Dendritic cell treated with granulocyte-macrophage colony-stimulating factor and Interleukin-4, amounts not matched to agents 40 ng/mL and 50 ng/mL, for 4 days (primary cell): ENCODE measurements at regions of chr9 and their contacts with region 1.

Region 1: GRCh38 chr9:129177791-129178559 is at the start of gene IER5L:
- H3K4me3 Mint-ChIP-seq: peak within 1 kb of the TSS; percentile 99
- H3K27ac Mint-ChIP-seq: peak within 1 kb of the TSS; percentile 91
- H3K4me1 Mint-ChIP-seq: peaks cover 40% of the 10 kb centered on the region
- H3K27me3 Mint-ChIP-seq: peaks cover 31% of the 10 kb centered on the region

Region 2: DNA sequence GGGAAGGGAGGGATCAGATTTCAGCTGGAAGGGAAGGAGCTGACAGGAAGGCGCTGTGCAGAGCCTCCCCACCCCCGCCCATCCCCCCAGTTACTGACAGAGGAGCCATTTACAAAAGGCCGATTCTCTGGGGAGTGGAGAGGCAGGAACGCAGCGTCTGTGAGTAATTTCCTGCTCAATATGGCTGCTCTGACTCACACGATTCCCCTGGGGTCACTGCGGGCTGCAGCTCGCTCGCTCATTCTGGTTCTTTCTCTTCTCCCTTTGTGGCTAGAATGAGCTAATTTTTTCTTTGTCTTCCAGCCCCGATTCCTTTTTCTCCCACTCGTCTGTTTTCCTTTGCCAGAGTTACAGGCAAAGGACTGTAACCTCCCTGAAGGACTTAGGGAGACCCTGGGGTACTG is 38.0 kb before region 1 on chr9:
- intact Hi-C with region 1: loop called (anchors 5 kb)
- H3K4me3 Mint-ChIP-seq: peak overlapping the region; percentile 77
- H3K27ac Mint-ChIP-seq: peak overlapping the region; percentile 96
- H3K4me1 Mint-ChIP-seq: peaks cover 59% of the 10 kb centered on the region
- H3K27me3 Mint-ChIP-seq: no peaks in the 10 kb centered on the region

Region 3: GRCh38 chr9:129333953-129334724 is 156.2 kb after region 1 on chr9:
- intact Hi-C with region 1: loop called (anchors 5 kb)
- H3K4me3 Mint-ChIP-seq: peak overlapping the region; percentile 73
- H3K27ac Mint-ChIP-seq: peak overlapping the region; percentile 83
- H3K4me1 Mint-ChIP-seq: peaks cover 54% of the 10 kb centered on the region
- H3K27me3 Mint-ChIP-seq: no peaks in the 10 kb centered on the region

Region 4: GRCh38 chr9:129413537-129414376 is 235.8 kb after region 1 on chr9:
- intact Hi-C with region 1: loop called (anchors 10 kb)
- H3K4me3 Mint-ChIP-seq: peak overlapping the region; percentile 82
- H3K27ac Mint-ChIP-seq: peak overlapping the region; percentile 93
- H3K4me1 Mint-ChIP-seq: peaks cover 45% of the 10 kb centered on the region
- H3K27me3 Mint-ChIP-seq: no peaks in the 10 kb centered on the region

Region 5: DNA sequence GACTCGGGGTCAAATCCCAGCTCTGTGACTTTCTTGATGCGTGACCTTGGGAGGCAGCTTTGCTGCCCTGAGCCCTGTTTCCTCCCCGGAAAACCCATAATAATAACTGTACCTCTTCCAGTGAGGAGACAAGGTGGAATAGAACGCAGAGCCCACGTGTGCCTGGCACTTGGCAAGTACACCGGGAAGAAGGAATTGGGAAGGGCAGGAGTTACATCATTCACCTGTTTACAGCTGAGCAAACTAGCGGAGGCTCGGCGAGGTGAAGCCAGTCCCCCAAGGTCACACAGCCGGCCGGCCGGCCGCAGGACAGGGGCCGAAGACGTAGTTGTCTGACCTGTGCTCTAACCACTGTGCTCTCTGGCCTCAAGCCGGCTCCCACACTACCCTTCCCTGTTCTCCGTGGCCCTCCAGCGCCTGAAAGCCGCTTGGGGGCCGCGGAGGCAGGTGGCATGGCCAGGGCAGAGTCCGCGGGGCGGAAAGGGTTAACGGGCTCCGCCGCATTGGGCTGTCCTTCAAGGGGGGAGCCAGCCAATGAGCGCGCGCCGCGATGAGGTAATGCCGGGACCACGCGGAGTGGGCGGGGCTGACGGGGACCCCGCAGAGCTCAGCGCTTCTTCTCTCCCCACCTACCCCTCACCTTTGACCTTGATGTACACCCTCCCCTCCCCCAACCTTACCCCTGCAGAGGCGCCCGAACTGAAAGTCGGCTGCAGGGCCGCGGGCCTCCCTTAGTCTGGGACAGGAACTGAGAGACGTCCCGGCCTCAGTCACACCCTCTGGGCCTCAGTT is 317.8 kb after region 1 on chr9:
- intact Hi-C with region 1: loop called (anchors 5 kb)
- H3K4me3 Mint-ChIP-seq: peak overlapping the region; percentile 97
- H3K27ac Mint-ChIP-seq: peak overlapping the region; percentile 86
- H3K4me1 Mint-ChIP-seq: peaks cover 76% of the 10 kb centered on the region
- H3K27me3 Mint-ChIP-seq: peaks cover 2% of the 10 kb centered on the region

Region 6: DNA sequence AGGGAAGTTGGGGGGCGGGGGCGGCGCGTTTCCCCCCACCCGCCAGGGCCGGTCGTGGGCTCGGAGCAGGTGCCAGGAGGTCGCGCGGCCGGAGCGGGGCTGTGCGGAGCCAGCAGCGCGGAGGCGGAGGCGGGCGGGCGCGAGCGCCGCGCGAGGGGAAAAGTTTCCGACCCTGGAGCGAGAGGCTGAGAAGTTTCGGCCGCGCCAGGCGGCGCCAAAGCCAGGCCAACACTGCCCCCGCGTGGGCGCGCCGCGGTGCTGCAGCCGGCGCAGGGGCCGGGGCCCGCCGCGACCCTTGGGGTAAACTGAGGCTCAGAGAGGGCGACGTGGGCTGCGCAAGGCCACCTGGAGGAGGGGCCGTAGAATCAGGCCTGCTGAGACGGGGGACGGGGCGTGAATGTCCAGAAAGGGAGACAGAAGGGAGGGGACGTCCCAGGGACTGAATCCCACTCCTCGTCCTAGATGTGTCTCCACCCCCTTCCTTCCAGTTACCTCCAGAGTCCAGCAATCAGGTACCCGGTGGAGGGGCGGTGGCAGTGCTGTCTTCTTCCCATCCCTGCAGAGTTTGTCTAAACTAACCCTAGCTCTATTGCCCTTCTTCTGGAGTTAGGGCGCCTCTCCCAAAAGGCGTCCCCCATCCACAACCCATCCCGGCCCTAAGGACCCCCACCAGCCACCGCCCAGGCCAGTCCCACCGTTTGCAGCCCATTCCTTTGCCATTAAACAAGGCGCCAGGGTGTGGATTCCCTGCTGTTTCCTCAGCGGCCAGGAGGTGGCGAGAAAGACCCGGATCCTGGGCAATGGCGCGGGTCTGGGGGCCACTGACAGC is 432.7 kb after region 1 on chr9:
- intact Hi-C with region 1: loop called (anchors 10 kb)
- H3K4me3 Mint-ChIP-seq: peak overlapping the region; percentile 84
- H3K27ac Mint-ChIP-seq: peak overlapping the region; percentile 83
- H3K4me1 Mint-ChIP-seq: peaks cover 42% of the 10 kb centered on the region
- H3K27me3 Mint-ChIP-seq: peaks cover 26% of the 10 kb centered on the region